Kidney (tissue), 22 donors: ENCODE measurements at regions of chr1 and their contacts with region 1.

Region 1: DNA sequence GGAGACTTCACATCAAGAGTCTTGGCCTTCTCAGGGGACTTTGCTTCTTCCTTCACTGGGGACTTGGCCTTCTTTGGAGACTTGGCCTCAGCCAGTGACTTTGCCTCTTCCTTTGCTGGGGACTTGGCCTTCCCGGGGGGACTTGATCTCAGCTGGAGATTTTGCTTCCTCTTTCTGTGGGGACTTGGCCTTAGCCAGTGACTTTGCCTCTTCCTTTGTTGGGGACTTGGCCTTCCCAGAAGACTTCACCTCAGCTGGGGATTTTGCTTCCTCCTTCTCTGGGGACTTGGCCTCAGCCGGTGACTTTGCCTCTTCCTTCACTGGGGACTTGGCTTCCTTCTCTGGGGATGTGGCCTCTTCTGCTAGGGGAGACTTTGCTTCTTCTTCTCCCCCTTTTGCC is 13.5 kb upstream of the CD2 start:
- DNase-seq: no peak
- H3K4me3 ChIP-seq: no peak overlapping the region
- H3K27ac ChIP-seq: no peak overlapping the region
- H3K4me1 ChIP-seq: no peaks in the 10 kb centered on the region
- H3K27me3 ChIP-seq: no peaks in the 10 kb centered on the region
- CTCF ChIP-seq: no peak

Region 2: DNA sequence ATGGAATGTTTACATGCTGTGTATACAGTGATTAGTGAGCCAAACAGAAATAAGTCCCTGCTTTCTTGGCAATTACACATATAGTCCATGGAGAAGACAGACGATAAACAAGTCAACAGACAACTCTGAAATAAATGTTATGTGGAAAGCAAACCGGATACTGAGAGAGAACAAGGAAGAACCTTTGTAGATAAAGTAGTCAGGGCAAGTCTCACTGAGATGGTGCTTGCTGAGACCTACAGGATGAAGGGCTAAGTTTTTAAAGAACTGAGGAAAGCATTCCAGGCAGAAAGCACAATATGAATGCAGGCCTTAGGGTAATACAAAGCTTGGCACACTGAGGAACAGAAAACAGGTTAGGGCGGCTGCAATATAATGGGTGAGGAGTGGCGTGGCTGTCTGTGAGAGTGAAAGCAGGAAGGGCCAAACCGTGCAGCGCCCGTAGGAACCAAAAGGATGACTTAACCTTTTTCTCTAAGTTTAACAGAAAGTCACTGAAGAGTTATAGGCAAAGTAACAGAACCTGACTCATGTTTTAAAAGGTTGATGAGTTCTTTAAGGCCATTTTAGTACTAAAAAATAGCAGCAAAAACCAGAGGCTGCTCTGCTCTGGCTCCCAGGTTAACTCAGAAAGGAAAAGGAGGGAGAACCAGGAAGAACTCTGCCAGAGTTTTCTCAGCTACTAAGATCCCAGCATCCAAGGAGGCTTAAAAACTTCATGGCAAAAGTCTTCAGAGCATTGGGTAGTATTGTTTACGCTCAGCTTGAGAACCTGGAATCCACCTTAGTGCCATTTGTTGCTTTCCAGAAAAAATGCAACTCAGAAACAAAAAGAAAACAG is 310.7 kb after region 1 on chr1:
- intact Hi-C with region 1: loop called (anchors 5 kb)
- DNase-seq: peak in 1 of 5 donors; percentile 13
- H3K4me3 ChIP-seq: peak overlapping the region in 2 of 3 donors; percentile 19 to 40
- H3K27ac ChIP-seq: peak overlapping the region in 1 of 2 donors; percentile 20
- H3K4me1 ChIP-seq: no peaks in the 10 kb centered on the region
- H3K27me3 ChIP-seq: no peaks in the 10 kb centered on the region
- CTCF ChIP-seq: no peak